Breast epithelium (tissue), 4 donors: ENCODE measurements at regions of chr2 and their contacts with region 1.

Region 1: GRCh38 chr2:120239488-120240287 is 13.0 kb upstream of the RALB start:
- DNase-seq: peak in 1 of 2 donors; percentile 42
- H3K4me3 ChIP-seq: peak overlapping the region in 1 of 3 donors; percentile 1
- H3K27ac ChIP-seq: peak overlapping the region; percentile 46 to 76
- H3K4me1 ChIP-seq: no peaks in the 10 kb centered on the region
- H3K27me3 ChIP-seq: no peaks in the 10 kb centered on the region
- CTCF ChIP-seq: no peak
- POLR2A ChIP-seq: no peak

Region 2: DNA sequence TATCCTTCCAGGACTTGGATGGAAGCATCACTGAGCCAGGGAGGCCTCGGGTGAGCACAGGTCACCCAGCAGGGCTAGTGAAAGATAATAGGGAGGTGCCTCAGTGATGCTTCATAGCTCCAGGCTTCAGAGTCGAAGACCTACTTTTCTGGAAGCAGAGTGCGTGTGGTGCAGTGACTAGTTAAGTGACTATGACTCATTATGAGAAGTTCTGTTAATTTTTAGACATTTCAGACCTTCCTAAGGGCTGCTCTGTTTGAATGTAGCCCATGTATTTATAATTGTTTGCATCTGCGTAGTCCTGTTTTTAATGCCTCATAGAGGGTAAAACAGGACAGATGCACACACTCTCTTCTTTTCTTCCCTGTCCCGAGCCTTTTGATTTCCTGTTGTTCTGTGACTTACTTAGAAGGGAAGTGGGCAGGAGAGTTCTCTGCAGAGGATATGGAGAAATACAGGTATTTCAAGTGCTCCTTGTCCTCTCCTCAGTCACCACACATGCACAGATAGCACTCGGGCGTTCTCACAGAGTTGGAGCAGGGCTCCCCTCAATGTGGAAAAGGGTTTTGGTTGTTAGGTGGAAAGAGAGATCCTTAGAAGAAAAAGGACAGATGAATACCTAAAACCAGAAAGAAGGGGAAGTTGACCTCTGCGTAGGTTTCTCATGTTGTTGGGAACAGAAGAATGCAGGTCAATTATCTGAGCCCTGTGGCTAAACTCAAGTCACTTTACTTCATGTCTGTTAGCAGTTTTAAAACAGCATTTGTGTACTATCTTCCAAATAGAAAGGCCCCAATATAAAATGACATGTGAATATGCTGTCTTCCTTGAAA is 47.7 kb after region 1 on chr2:
- intact Hi-C with region 1: loop called (anchors 2 kb)
- DNase-seq: no peak
- H3K4me3 ChIP-seq: no peak overlapping the region
- H3K27ac ChIP-seq: peak overlapping the region; percentile 2 to 32
- H3K4me1 ChIP-seq: no peaks in the 10 kb centered on the region
- H3K27me3 ChIP-seq: no peaks in the 10 kb centered on the region
- CTCF ChIP-seq: no peak
- POLR2A ChIP-seq: no peak